Activated CD4-positive, alpha-beta T cell treated with anti-CD3 and anti-CD28 coated beads, Interleukin-2, amount 10 ng/mL, durations not matched to agents 24 days and 14 days (primary cell): ENCODE measurements at regions of chr14 and their contacts with region 1.

Region 1: DNA sequence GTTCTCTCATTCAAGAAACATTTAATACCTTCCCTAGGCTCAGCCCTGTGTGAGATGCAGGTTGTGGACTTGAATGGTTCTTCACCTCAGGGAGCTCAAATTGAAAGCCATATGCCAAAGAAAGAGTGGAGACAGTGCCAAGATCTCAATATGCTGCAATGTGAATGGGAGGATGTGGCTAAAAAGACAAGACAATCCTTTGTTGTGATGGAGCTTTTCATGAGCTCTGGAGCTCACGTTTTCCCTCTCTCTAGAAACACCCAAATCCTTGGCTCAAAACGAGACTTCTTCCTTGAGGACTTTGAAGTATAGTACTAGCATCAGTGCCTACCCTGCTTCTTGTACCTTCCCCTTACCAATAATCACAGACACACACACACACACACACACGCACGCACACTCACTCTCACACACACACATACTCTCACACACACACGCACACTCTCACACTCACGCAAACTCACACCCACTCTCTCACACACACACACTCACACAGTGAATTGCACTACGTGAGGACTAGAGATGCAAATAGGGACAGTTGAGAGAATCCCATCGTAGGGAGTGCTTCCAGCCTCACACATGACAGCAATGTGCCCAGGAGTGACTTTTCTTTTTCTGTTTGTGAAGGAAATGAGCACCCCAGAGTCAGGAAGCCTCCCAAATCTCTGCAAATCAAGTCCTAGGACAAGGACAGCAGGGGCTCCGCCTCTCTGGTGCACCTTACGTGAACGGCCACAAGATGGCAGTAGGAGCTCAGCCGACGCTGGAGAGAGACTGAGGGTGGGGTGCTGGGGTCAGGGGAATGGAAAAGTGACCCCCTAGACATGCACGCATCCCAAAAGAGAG is 231.4 kb downstream of the PCNX1 start:
- DNase-seq: peak; percentile 89
- H3K4me3 Mint-ChIP-seq: no peak overlapping the region
- H3K27ac Mint-ChIP-seq: no peak overlapping the region
- H3K4me1 Mint-ChIP-seq: peaks cover 39% of the 10 kb centered on the region
- H3K27me3 Mint-ChIP-seq: no peaks in the 10 kb centered on the region

Region 2: DNA sequence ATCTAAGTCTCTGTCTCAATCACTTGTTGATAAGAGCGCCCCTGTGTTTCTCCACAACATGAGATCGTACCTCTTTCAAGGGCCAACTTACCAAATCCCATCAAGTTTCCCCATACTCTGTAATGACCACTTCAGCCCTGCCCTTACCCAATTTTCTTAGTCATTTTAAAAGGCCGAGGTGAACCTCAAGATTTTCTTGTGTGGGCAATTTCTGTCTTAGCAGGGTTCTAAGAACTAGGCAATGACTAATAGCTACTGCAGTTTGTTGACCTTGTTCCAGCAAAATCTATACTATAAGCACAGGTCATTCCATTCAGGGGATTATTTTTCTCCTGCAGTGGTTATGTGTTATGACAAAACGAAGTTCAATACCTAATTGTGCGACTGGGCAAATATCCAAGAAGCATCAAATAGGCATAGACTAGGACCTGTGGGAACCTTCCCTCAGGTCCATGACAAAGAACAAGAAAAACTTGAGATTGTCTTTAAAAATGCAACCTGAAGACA is 128.4 kb after region 1 on chr14:
- intact Hi-C with region 1: loop called (anchors 1 kb)
- DNase-seq: peak; percentile 67
- H3K4me3 Mint-ChIP-seq: peak overlapping the region; percentile 36
- H3K27ac Mint-ChIP-seq: peak overlapping the region; percentile 63
- H3K4me1 Mint-ChIP-seq: peaks cover 32% of the 10 kb centered on the region
- H3K27me3 Mint-ChIP-seq: peaks cover 9% of the 10 kb centered on the region

Region 3: DNA sequence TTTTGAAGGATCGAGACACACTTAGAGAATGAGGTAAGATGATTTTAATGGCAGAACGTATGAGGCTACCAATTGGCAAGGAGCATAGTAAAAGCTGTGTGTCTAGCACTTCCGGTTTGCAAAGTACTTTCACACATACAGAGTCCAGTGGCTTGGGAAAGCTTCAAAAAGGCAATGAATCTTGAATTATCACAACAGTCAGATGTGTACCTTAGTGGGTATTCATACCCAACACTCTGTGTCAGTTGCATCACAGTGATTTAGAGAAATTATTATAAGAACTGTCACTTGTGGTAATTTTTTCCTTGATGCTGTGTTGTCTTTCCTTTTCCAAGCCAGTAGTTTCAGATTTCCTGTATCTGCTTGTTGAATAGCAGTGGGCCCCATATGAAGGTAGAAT is 192.7 kb after region 1 on chr14:
- intact Hi-C with region 1: loop called (anchors 1 kb)
- DNase-seq: no peak
- H3K4me3 Mint-ChIP-seq: peak overlapping the region; percentile 23
- H3K27ac Mint-ChIP-seq: peak overlapping the region; percentile 92
- H3K4me1 Mint-ChIP-seq: peaks cover 55% of the 10 kb centered on the region
- H3K27me3 Mint-ChIP-seq: no peaks in the 10 kb centered on the region

Region 4: GRCh38 chr14:71415404-71415690 is 276.7 kb after region 1 on chr14:
- intact Hi-C with region 1: loop called (anchors 2 kb)
- DNase-seq: no peak
- H3K4me3 Mint-ChIP-seq: no peak overlapping the region
- H3K27ac Mint-ChIP-seq: no peak overlapping the region
- H3K4me1 Mint-ChIP-seq: peaks cover 25% of the 10 kb centered on the region
- H3K27me3 Mint-ChIP-seq: no peaks in the 10 kb centered on the region